ENCODE measurements at regions of chr12 and their contacts with region 1.

Region 1: GRCh38 chr12:108884116-108885012 is 4.5 kb downstream of the DAO start:
- DNase-seq: peak; percentile 61 to 65
- H3K4me3 ChIP-seq: no peak overlapping the region
- H3K27ac ChIP-seq: no peak overlapping the region
- H3K4me1 ChIP-seq: no peaks in the 10 kb centered on the region
- H3K27me3 ChIP-seq: no peaks in the 10 kb centered on the region
- CTCF ChIP-seq: peak in 4 of 7 experiments; percentile 23 to 62 (median 44)
- EP300 ChIP-seq: no peak
- POLR2A ChIP-seq: no peak

Region 2: GRCh38 chr12:108784270-108784669 is 100.1 kb before region 1 on chr12:
- intact Hi-C with region 1: no loop called
- DNase-seq: no peak
- H3K4me3 ChIP-seq: no peak overlapping the region
- H3K27ac ChIP-seq: peak overlapping the region in 1 of 5 donors; percentile 63
- H3K4me1 ChIP-seq: peaks cover 0 to 41% (median 19%) of the 10 kb centered on the region in 4 donors
- H3K27me3 ChIP-seq: no peaks in the 10 kb centered on the region
- CTCF ChIP-seq: no peak
- EP300 ChIP-seq: no peak
- POLR2A ChIP-seq: no peak

Region 3: DNA sequence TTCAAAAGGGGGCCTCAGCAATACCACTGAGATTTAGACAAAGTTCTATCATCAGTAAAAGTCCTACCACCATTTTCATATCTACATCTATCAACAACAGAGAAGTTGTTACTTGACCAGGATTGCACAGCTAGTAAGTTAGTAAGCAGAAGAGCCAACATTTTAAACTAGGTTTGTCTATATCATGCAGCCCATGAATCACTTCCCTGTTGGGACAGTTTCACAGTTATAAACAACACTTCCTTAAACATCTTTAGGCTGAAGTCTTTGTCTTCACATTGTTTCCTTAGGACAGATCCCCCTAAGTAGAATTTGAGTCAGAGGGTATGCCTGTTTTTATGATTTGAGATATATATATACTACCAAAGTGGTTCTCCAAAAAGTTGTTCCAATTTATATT is 64.0 kb after region 1 on chr12:
- intact Hi-C with region 1: loop called (anchors 10 kb)
- DNase-seq: no peak
- H3K4me3 ChIP-seq: no peak overlapping the region
- H3K27ac ChIP-seq: no peak overlapping the region
- H3K4me1 ChIP-seq: peaks cover 7 to 11% (median 8%) of the 10 kb centered on the region in 4 donors
- H3K27me3 ChIP-seq: no peaks in the 10 kb centered on the region
- CTCF ChIP-seq: no peak
- EP300 ChIP-seq: no peak
- POLR2A ChIP-seq: no peak